Heart left ventricle (tissue), 16 donors: ENCODE measurements at regions of chr12 and their contacts with region 1.

Region 1: GRCh38 chr12:128259556-128260070 is 7.4 kb upstream of the TMEM132C start:
- DNase-seq: no peak
- ATAC-seq: no peak
- H3K4me3 ChIP-seq: no peak overlapping the region
- H3K27ac ChIP-seq: no peak overlapping the region
- H3K4me1 ChIP-seq: no peaks in the 10 kb centered on the region
- H3K27me3 ChIP-seq: peaks cover 0 to 43% (median 4%) of the 10 kb centered on the region in 9 donors
- CTCF ChIP-seq: peak; percentile 30 to 78 (median 58)
- POLR2A ChIP-seq: no peak

Region 2: DNA sequence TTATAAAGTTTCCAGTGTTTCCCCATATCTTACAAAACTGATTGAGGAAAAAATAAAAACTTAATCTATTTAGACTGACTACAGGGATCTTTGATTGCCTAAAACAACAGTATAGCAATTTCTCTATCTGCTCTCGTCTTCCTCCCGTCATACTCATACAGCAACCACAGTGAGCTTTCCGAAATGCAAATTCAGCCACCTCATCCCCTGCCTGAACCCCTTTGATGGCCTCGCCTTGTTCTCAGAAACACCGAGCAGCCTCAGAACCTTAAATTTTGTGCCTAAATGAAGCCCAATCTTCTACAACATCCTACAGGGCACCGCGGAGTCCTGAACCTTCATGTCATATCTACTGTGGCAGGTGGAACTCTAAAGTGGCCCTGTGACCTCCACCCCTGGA is 216.3 kb before region 1 on chr12:
- intact Hi-C with region 1: no loop called
- DNase-seq: no peak
- ATAC-seq: no peak
- H3K4me3 ChIP-seq: no peak overlapping the region
- H3K27ac ChIP-seq: no peak overlapping the region
- H3K4me1 ChIP-seq: no peaks in the 10 kb centered on the region
- H3K27me3 ChIP-seq: no peaks in the 10 kb centered on the region
- CTCF ChIP-seq: no peak
- POLR2A ChIP-seq: no peak

Region 3: DNA sequence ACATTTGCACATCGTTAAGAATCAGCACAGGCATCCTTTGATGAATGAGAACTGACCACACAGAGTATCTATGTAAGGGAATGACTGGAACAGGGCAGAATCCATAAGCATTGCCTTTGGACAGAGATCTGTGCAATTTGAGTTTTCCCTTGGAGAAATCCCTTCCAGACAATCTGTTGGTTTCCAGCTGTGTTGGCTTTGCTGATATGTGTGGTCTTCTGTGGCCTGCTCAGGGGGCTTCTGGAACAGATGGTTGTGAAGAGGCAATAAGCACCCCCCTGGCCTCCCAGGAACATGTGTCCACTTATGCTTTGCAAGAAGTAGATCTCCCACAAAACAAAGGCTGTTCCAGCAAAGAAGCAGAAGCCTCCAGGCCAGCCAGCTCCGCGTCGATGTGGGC is 104.0 kb before region 1 on chr12:
- intact Hi-C with region 1: no loop called
- DNase-seq: no peak
- ATAC-seq: no peak
- H3K4me3 ChIP-seq: no peak overlapping the region
- H3K27ac ChIP-seq: no peak overlapping the region
- H3K4me1 ChIP-seq: no peaks in the 10 kb centered on the region
- H3K27me3 ChIP-seq: no peaks in the 10 kb centered on the region
- CTCF ChIP-seq: no peak
- POLR2A ChIP-seq: no peak

Region 4: GRCh38 chr12:128190614-128191013 is 69.0 kb before region 1 on chr12:
- intact Hi-C with region 1: no loop called
- DNase-seq: no peak
- ATAC-seq: no peak
- H3K4me3 ChIP-seq: no peak overlapping the region
- H3K27ac ChIP-seq: no peak overlapping the region
- H3K4me1 ChIP-seq: no peaks in the 10 kb centered on the region
- H3K27me3 ChIP-seq: peaks cover 0 to 21% (median 0%) of the 10 kb centered on the region in 9 donors
- CTCF ChIP-seq: peak in 7 of 12 donors; percentile 12 to 37 (median 24)
- POLR2A ChIP-seq: no peak

Region 5: GRCh38 chr12:128204711-128205110 is 54.9 kb before region 1 on chr12:
- intact Hi-C with region 1: no loop called
- DNase-seq: no peak
- ATAC-seq: no peak
- H3K4me3 ChIP-seq: no peak overlapping the region
- H3K27ac ChIP-seq: no peak overlapping the region
- H3K4me1 ChIP-seq: no peaks in the 10 kb centered on the region
- H3K27me3 ChIP-seq: no peaks in the 10 kb centered on the region
- CTCF ChIP-seq: no peak
- POLR2A ChIP-seq: no peak

Region 6: GRCh38 chr12:128323145-128323920 is 63.7 kb after region 1 on chr12:
- intact Hi-C with region 1: loop called in 1 of 10 experiments (anchors 10 kb)
- DNase-seq: no peak
- ATAC-seq: peak in 2 of 4 donors; percentile 29 to 30
- H3K4me3 ChIP-seq: no peak overlapping the region
- H3K27ac ChIP-seq: no peak overlapping the region
- H3K4me1 ChIP-seq: no peaks in the 10 kb centered on the region
- H3K27me3 ChIP-seq: peaks cover 0 to 10% (median 0%) of the 10 kb centered on the region in 9 donors
- CTCF ChIP-seq: no peak
- POLR2A ChIP-seq: no peak

Region 7: DNA sequence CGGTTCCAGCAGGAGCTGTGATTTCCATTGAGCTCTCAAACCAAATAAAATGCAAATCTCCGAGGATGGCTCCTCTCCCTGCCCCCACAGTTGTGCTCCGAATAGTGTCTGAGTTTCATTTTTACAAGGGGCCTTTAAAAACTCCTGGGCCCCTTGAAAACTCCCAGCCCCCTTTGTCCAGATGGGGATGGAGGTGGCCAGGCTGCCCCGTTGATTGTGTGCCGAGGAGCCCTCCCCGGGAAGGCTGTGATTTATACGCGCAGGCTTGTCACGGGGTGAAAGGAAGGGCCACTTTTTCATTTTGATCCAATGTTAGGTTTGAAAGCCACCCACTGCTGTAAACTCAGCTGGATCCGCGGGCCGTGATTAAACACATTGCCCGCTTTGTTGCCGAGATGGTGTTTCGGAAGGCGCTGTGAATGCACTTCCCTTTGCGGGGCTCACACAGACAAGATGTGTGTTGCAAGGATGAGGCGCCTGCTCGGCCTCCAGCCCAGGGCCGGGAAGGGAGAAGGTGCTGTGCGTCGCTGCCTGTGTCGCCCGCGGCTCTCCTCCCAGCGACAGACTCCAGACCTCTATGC is 106.1 kb after region 1 on chr12:
- intact Hi-C with region 1: loop called in 1 of 10 experiments (anchors 10 kb)
- DNase-seq: no peak
- ATAC-seq: peak; percentile 34 to 72 (median 48)
- H3K4me3 ChIP-seq: peak overlapping the region in 10 of 12 donors; percentile 7 to 58 (median 44)
- H3K27ac ChIP-seq: peak overlapping the region in 1 of 12 donors; percentile 8
- H3K4me1 ChIP-seq: peaks cover 0 to 13% (median 0%) of the 10 kb centered on the region in 12 donors
- H3K27me3 ChIP-seq: peaks cover 0 to 54% (median 18%) of the 10 kb centered on the region in 9 donors
- CTCF ChIP-seq: no peak
- POLR2A ChIP-seq: no peak

Region 8: DNA sequence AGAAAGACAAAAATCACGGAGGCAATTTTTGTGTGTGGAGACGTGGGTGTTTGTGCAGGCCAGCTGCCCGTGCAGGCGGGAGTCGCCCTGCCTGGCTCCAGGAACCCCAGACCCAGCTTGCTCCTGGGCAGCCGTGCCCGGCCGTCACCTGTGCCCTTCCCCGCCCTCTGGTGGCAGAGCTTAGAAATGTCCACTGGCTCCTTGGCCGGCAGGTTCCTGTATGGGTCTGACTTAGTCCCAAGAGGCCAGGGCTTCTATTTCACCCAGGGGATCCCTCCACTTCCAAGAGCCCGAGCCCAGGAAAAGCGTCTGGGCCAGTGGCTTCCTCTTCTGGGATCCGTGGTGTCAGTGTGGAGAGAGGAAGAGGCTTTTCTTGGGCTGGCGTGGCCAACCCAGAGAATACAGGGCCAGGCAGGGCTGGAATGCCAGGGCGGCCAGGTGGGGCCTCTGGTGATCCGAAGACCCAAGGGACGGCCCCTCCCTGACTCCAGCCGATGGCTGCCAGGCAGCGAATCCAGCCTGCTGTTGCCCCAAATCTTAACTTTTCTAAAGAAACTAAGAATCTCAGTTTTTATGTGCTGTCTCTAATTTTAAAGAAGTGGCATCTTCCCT is 128.3 kb after region 1 on chr12:
- intact Hi-C with region 1: loop called in 5 of 10 experiments (anchors 5 to 10 kb)
- DNase-seq: peak in 3 of 5 donors; percentile 12 to 40 (median 34)
- ATAC-seq: peak in 3 of 4 donors; percentile 50 to 81 (median 50)
- H3K4me3 ChIP-seq: no peak overlapping the region
- H3K27ac ChIP-seq: peak overlapping the region in 2 of 12 donors; percentile 29
- H3K4me1 ChIP-seq: peaks cover 0 to 12% (median 0%) of the 10 kb centered on the region in 12 donors
- H3K27me3 ChIP-seq: peaks cover 0 to 56% (median 2%) of the 10 kb centered on the region in 9 donors
- CTCF ChIP-seq: peak; percentile 35 to 68 (median 50)
- POLR2A ChIP-seq: no peak